ENCODE measurements at regions of chr6 and their contacts with region 1.

Region 1: GRCh38 chr6:151451950-151452749 is at the start of gene RMND1:
- DNase-seq: peak; percentile 98 to 100 (median 99)
- ATAC-seq: peak; percentile 95
- H3K4me3 ChIP-seq: peak within 1 kb of the TSS; percentile 74 to 81
- H3K4me3 Mint-ChIP-seq: peak within 1 kb of the TSS; percentile 92
- H3K27ac ChIP-seq: peak within 1 kb of the TSS; percentile 75 to 78
- H3K27ac Mint-ChIP-seq: peak within 1 kb of the TSS; percentile 92
- H3K4me1 ChIP-seq: peaks cover 24% of the 10 kb centered on the region
- H3K4me1 Mint-ChIP-seq: peaks cover 48% of the 10 kb centered on the region
- H3K27me3 ChIP-seq: no peaks in the 10 kb centered on the region
- H3K27me3 Mint-ChIP-seq: no peaks in the 10 kb centered on the region
- CTCF ChIP-seq: no peak
- total RNA-seq, gene RMND1: 5.8 to 6.3 TPM

Region 2: GRCh38 chr6:150600301-150601017 is 851.7 kb before region 1 on chr6:
- CTCF ChIA-PET with region 1: no interaction called
- POLR2A ChIA-PET with region 1: no interaction called
- intact Hi-C with region 1: loop called in 1 of 2 experiments (anchors 10 kb)
- DNase-seq: peak; percentile 1 to 85 (median 53)
- ATAC-seq: peak; percentile 69
- H3K4me3 ChIP-seq: peak overlapping the region; percentile 55 to 64
- H3K4me3 Mint-ChIP-seq: peak overlapping the region; percentile 90
- H3K27ac ChIP-seq: peak overlapping the region in 1 of 2 experiments; percentile 37
- H3K27ac Mint-ChIP-seq: peak overlapping the region; percentile 87
- H3K4me1 ChIP-seq: peaks cover 4% of the 10 kb centered on the region
- H3K4me1 Mint-ChIP-seq: peaks cover 15% of the 10 kb centered on the region
- H3K27me3 ChIP-seq: peaks cover 0 to 15% of the 10 kb centered on the region in 2 experiments
- H3K27me3 Mint-ChIP-seq: peaks cover 27% of the 10 kb centered on the region
- CTCF ChIP-seq: peak; percentile 34

Region 3: DNA sequence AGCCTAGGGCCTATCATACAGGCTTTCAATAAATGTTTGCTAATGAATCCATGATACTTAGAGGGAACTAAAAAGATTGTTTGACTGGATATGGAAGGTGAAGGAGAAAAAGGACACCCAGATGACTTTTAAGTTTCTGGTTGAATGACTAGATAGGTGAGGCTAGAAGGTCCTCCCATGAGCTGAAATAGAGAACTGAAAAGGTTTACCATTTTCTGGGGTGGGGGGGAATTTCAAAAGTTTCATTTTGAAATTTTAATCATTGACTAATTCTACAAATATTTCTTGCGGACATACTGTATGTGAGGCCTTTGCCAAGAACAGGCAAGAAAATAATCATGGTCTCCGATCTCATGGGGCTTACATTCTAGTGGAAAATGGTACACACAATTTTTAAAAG is 42.9 kb before region 1 on chr6:
- CTCF ChIA-PET with region 1: interaction called, 11 read pairs
- POLR2A ChIA-PET with region 1: interaction called, 5 read pairs
- intact Hi-C with region 1: loop called in 1 of 2 experiments (anchors 2 kb)
- DNase-seq: no peak
- ATAC-seq: no peak
- H3K4me3 ChIP-seq: no peak overlapping the region
- H3K4me3 Mint-ChIP-seq: no peak overlapping the region
- H3K27ac ChIP-seq: no peak overlapping the region
- H3K27ac Mint-ChIP-seq: peak overlapping the region; percentile 62
- H3K4me1 ChIP-seq: peaks cover 14% of the 10 kb centered on the region
- H3K4me1 Mint-ChIP-seq: peaks cover 34% of the 10 kb centered on the region
- H3K27me3 ChIP-seq: no peaks in the 10 kb centered on the region
- H3K27me3 Mint-ChIP-seq: no peaks in the 10 kb centered on the region
- CTCF ChIP-seq: no peak

Region 4: DNA sequence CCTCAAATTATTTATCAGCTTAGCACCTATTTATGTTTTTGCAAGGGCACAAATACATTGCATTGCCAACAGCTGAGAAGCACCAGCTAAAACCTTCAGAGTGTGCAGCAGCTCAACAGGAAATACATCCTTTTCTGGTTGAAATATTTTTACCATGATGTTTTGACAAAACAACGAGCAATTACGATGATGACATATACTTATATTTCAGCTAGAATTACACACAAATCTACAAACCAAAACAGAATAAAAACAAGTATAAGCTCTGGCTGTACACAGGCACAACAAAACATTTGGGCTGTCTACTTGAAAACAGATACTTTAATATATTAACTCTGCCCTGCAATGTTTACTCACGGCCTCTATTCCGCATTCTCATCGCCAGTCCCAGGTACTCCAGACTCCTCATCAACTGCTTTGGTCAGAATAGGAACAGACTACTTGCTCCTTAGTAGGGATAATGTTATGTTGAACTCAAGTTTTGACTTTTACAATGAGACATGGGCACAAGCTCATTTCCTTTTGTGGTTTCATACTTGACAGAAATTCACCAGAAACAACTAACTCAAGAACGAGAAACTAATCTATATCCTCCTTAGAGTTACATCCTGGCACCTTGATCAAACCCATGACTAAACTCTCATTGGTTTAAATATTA is 732.9 kb after region 1 on chr6:
- CTCF ChIA-PET with region 1: no interaction called
- POLR2A ChIA-PET with region 1: interaction called, 5 read pairs
- intact Hi-C with region 1: loop called in 1 of 2 experiments (anchors 5 kb)
- DNase-seq: peak in 4 of 9 experiments; percentile 16 to 69 (median 41)
- ATAC-seq: peak; percentile 71
- H3K4me3 ChIP-seq: peak overlapping the region; percentile 47 to 51
- H3K4me3 Mint-ChIP-seq: peak overlapping the region; percentile 91
- H3K27ac ChIP-seq: peak overlapping the region; percentile 80 to 92
- H3K27ac Mint-ChIP-seq: peak overlapping the region; percentile 99
- H3K4me1 ChIP-seq: peaks cover 48% of the 10 kb centered on the region
- H3K4me1 Mint-ChIP-seq: peaks cover 74% of the 10 kb centered on the region
- H3K27me3 ChIP-seq: no peaks in the 10 kb centered on the region
- H3K27me3 Mint-ChIP-seq: no peaks in the 10 kb centered on the region
- CTCF ChIP-seq: no peak

Region 5: DNA sequence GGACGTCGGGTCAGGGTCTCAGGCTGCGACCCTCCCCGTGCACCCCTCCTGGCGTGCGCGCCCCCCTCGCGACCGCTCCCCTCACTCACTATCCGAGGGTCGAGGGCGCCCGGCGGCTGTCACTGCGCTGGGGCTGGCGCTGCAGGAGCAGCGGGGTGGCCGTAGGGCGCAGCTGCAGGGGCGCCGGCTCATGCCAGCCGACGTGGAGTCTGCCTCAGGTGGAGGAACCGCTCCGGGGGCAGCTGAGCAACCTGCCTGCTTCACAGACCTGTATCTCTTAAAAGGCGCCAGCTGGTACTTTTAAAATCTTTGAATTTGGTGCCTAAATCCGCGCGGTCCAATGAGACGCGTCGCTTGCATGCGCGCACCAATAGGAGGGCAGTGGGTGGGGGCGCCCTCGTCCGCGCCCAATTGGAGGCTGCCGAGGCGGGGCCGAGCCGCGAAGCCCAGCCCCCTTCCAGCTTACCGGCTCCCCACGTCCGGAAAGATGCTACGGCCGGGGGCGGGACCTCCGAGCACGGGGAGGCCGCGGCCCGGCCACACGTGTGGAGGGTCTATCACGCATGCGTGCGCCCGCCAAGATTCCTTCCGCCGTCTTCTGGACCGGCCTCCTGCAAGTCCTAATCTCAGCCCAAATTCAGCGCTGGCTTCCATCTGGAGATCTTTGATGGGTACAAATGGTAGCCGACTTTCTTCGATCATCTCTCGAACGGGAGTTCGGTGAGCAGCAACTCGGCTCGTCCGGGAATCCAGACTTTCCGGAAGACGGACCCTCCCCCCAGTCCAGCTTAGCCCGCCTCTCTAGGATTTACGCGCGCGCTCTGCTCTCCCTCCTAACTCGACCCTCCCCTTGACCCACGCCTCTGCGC is 1530.9 kb after region 1 on chr6 and contains the start of gene FBXO5:
- CTCF ChIA-PET with region 1: no interaction called
- POLR2A ChIA-PET with region 1: no interaction called
- intact Hi-C with region 1: loop called (anchors 5 kb)
- DNase-seq: peak; percentile 94 to 99 (median 97)
- ATAC-seq: peak; percentile 93
- H3K4me3 ChIP-seq: peak within 1 kb of the TSS; percentile 70 to 85
- H3K4me3 Mint-ChIP-seq: peak within 1 kb of the TSS; percentile 99
- H3K27ac ChIP-seq: peak within 1 kb of the TSS; percentile 73 to 94
- H3K27ac Mint-ChIP-seq: peak within 1 kb of the TSS; percentile 97
- H3K4me1 ChIP-seq: peaks cover 18% of the 10 kb centered on the region
- H3K4me1 Mint-ChIP-seq: peaks cover 48% of the 10 kb centered on the region
- H3K27me3 ChIP-seq: no peaks in the 10 kb centered on the region
- H3K27me3 Mint-ChIP-seq: no peaks in the 10 kb centered on the region
- CTCF ChIP-seq: no peak
- total RNA-seq, gene FBXO5: 3.0 to 3.9 TPM

Measured in CD8-positive, alpha-beta T cell (primary cell).